ENCODE measurements at regions of chr22 and their contacts with region 1.

Region 1: DNA sequence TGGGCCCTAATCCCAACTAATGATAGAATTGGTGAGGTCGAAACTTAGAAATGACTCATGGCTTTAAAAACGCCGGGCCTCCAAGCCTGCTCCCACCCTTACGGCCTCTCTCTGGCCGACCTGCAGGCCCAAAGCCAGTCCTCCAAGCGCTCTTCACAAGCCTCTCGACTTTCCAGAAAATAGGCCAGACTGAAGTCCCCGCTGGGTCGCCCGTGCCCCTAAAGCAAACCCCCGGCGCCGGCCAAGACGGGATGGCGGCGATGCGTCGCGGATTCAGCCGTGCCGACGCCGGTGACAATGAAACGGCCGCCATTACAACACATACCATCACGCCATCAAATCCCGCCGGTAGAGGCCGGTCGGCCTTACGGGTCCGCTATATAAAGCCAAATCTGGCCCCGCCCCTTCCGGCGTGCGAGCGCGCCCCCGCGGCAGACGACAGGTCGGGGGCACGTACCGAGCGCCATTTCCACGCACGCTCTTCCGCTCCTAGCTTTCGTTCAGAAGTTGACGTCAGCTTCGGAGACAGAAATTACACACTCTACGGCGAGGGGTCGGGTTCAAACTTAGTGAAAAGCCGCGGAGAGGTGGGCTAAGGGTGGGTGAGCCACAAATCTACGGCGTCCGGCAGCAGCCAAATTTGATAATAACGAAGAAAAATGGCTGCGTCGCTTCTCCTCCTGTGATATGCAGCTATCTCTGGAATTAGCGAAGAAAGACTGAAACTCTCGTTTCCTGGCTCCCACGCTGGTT is at the start of gene RPL3:
- DNase-seq: peak; percentile 97
- ATAC-seq: peak; percentile 82
- H3K4me3 Mint-ChIP-seq: peak within 1 kb of the TSS; percentile 99
- H3K27ac Mint-ChIP-seq: peak within 1 kb of the TSS; percentile 92
- H3K4me1 Mint-ChIP-seq: peaks cover 45% of the 10 kb centered on the region
- H3K27me3 Mint-ChIP-seq: no peaks in the 10 kb centered on the region
- total RNA-seq, gene RPL3: 1,571 to 1,769 TPM

Region 2: DNA sequence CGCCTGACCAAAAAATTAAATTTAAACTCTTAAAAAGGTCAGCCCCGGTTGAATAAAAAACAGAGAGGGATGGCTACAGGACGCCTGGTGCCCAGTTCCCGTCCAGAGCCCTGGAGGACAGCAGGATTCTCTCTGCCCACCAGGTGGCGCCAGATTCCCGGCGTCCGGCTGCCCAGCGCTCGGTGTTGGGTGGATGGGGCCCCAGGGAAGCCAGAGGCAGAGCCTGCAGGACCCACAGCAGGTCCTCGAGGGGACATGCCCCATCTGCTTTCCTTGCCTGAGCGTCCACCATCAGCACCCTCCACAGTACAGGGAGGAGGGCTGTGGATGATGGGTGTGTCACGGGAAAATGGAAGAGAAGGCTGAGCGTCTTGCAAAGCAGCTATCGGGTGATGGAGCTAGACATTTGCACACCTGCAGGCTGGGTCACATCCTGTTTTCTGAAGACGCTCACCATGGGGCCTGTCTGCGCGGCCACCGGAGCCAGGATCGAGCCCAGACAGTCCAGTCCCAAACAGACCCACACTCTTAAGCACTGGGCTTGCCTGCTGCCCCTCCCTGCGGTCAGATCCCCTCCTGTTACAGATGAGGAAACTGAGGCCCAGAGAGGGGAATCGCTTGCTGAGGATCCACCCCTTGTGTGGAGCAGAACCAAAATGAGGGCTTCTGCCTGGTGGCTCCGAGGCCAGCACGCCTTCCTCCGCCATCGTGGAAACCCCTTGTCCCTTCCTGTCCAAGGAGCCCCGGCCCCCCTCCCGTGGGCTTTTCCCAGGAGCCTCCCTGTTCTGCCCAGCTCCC is 148.4 kb before region 1 on chr22:
- CTCF ChIA-PET with region 1: interaction called, 254 read pairs
- DNase-seq: peak; percentile 87
- ATAC-seq: peak; percentile 82
- H3K4me3 Mint-ChIP-seq: peak overlapping the region; percentile 36
- H3K27ac Mint-ChIP-seq: peak overlapping the region; percentile 70
- H3K4me1 Mint-ChIP-seq: peaks cover 36% of the 10 kb centered on the region
- H3K27me3 Mint-ChIP-seq: peaks cover 23% of the 10 kb centered on the region

Region 3: DNA sequence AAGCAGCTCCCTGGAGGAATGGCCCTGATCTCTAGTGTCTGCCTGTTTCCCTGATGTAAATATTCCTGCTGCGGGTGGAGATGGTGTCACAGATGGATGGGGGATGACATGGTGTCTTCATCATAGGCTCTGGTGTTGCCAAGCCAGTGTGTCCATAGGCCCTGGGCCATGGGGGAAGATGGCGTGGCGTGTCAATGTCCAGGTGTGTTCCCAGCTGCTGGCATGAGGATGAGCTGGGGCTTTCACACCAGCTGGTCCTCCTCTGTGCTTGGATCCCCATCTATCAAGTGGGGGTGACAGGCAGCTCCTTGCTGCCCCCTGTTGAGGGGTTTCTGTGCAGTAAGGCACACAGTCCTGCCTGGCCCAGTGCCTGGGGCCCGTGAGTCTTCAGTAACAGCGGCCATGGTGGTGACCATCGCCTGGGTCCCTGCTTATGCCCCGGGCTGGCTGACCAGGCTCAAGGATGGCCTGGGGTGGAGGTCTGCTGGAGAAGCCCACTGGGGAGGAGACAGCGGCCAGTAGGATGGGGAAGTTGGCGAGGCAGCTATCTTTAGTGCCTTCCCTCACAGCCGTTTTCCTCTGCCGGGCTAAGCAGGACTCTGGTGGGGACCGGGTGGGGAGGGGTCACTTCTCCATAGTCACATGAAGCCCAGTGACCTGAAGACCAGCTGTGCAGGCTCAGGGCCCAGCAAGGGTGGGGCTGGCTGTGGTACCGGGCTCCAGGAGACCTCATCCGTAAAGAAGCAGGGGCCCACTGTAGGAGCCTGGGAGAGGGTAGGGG is 12.7 kb before region 1 on chr22:
- CTCF ChIA-PET with region 1: interaction called, 26 read pairs
- DNase-seq: peak; percentile 68
- ATAC-seq: peak; percentile 27
- H3K4me3 Mint-ChIP-seq: no peak overlapping the region
- H3K27ac Mint-ChIP-seq: no peak overlapping the region
- H3K4me1 Mint-ChIP-seq: peaks cover 11% of the 10 kb centered on the region
- H3K27me3 Mint-ChIP-seq: peaks cover 4% of the 10 kb centered on the region

Region 4: GRCh38 chr22:39332441-39333064 is 13.1 kb after region 1 on chr22:
- CTCF ChIA-PET with region 1: interaction called, 30 read pairs
- DNase-seq: no peak
- ATAC-seq: no peak
- H3K4me3 Mint-ChIP-seq: no peak overlapping the region
- H3K27ac Mint-ChIP-seq: no peak overlapping the region
- H3K4me1 Mint-ChIP-seq: peaks cover 7% of the 10 kb centered on the region
- H3K27me3 Mint-ChIP-seq: peaks cover 3% of the 10 kb centered on the region

Region 5: DNA sequence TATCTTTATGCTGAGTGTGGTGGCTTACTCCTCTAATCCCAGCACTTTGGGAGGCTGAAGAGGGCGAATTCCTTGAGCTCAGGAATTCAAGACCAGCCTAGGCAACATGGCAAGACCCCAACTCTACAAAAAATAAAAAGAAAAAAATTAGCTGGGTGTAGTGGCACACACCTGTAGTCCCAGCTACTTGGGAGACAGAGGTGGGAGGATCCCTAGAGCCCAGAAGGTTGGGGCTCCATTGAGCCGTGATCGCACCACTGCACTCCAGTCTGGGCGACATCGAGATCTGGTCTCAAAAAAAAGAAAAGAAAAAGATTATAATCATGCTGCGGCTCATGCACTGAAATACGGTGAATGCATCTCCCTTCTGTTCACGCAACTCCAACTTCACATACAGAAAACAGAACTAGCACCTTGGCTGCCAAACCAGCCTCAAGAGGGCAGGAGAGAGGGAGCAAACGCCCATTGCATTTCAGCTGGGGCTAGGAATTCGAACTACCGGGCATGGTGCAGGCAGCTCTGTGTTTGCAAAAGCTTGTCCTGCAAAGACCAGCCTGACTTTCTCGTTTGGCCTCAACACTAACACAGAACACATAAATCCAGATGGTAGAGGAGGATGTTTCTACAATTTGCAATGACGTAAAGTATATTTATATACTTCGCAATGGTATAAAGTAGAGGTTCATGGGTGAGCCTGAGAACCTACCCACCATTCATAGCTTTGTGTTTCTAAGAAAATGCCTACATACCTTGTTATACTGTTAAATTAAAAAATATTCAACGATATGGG is 24.0 kb after region 1 on chr22:
- CTCF ChIA-PET with region 1: interaction called, 21 read pairs
- DNase-seq: peak; percentile 71
- ATAC-seq: peak; percentile 83
- H3K4me3 Mint-ChIP-seq: no peak overlapping the region
- H3K27ac Mint-ChIP-seq: no peak overlapping the region
- H3K4me1 Mint-ChIP-seq: peaks cover 3% of the 10 kb centered on the region
- H3K27me3 Mint-ChIP-seq: peaks cover 35% of the 10 kb centered on the region

Region 6: GRCh38 chr22:39395936-39396796 is 76.7 kb after region 1 on chr22:
- CTCF ChIA-PET with region 1: interaction called, 12 read pairs
- DNase-seq: no peak
- ATAC-seq: no peak
- H3K4me3 Mint-ChIP-seq: no peak overlapping the region
- H3K27ac Mint-ChIP-seq: no peak overlapping the region
- H3K4me1 Mint-ChIP-seq: peaks cover 10% of the 10 kb centered on the region
- H3K27me3 Mint-ChIP-seq: no peaks in the 10 kb centered on the region

Measured in activated CD8-positive, alpha-beta memory T cell treated with anti-CD3 and anti-CD28 coated beads, Interleukin-2, amount 10 ng/mL, durations not matched to agents 7 days and 5 days (primary cell).